Motor neuron (in vitro differentiated cells): ENCODE measurements at regions of chr2 and their contacts with region 1.

Region 1: DNA sequence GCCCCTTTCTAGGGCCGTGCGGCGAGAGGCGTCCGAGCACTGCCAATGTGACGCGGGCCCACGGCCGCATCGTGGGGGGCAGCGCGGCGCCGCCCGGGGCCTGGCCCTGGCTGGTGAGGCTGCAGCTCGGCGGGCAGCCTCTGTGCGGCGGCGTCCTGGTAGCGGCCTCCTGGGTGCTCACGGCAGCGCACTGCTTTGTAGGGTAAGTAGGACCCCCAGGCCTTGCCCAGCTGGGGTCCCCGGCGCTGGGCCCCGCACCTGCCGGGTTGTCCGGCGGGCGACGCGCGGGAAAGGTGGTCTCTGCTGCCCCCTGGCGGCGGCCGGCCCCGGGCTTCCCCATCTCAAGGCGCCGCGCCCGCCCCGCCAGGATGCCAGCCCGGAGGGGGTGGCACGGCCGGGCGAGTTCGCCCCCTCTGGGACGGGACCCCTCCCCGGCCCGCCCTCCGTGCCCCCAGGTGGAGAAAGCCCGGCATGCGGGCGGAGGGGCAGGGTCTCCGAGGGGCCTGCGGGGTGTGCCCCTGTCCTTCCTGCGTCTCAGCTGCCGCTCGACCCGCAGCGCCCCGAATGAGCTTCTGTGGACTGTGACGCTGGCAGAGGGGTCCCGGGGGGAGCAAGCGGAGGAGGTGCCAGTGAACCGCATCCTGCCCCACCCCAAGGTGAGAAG is 1.9 kb downstream of the PRSS56 start:
- ATAC-seq: peak; percentile 23 to 76 (median 36)
- H3K4me3 ChIP-seq: peak overlapping the region; percentile 25 to 40 (median 35)
- H3K27ac ChIP-seq: no peak overlapping the region
- H3K4me1 ChIP-seq: peaks cover 43 to 56% of the 10 kb centered on the region in 2 donors

Region 2: DNA sequence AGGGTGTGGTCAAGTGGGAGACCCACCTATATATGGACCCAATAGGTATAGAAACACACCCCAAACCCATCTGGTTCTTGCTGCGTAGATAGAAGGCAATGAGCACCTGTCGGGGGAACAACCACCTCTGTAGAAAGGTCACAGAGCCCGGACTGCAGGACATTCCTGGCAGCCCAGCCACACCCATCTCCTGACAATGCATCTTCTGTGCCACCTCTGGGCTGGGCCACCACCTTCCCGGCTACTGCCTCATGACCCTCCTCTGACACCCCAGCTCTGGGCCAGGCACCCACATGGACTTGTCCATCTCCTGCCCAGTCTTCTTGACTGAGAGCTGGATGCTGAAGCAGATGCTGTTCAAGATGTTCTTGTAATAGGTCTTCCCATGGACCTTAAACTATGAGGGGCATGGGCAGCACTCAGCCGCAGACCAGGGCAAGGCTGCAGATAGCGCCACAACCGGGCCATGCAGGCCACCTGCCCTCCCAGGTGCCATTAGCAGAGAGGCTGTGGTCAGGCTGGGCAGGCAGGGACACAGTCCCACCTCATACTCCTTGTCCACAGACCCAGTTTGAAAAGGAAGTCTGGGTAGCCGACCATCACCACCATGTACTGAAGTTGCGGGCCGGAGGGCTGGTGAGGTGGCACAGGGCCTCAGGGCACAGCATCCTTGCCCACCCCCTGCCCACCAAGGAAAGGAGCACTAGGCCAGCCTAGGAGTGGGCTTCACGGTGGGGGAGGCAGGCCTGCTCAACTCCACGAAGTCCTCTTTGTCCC is 106.2 kb before region 1 on chr2:
- in situ Hi-C with region 1: no loop called
- ATAC-seq: no peak
- H3K4me3 ChIP-seq: no peak overlapping the region
- H3K27ac ChIP-seq: no peak overlapping the region
- H3K4me1 ChIP-seq: peaks cover 0 to 11% of the 10 kb centered on the region in 2 donors

Region 3: GRCh38 chr2:232455426-232456255 is 66.5 kb before region 1 on chr2 and contains the start of gene ALPI:
- in situ Hi-C with region 1: loop called in 1 of 9 experiments (anchors 10 kb)
- ATAC-seq: no peak
- H3K4me3 ChIP-seq: no peak within 1 kb of the TSS
- H3K27ac ChIP-seq: no peak within 1 kb of the TSS
- H3K4me1 ChIP-seq: no peaks in the 10 kb centered on the region
- total RNA-seq, gene ALPI: 0.10 to 0.42 (median 0.18) TPM in 5 of 8 experiments, not detected in the others

Region 4: DNA sequence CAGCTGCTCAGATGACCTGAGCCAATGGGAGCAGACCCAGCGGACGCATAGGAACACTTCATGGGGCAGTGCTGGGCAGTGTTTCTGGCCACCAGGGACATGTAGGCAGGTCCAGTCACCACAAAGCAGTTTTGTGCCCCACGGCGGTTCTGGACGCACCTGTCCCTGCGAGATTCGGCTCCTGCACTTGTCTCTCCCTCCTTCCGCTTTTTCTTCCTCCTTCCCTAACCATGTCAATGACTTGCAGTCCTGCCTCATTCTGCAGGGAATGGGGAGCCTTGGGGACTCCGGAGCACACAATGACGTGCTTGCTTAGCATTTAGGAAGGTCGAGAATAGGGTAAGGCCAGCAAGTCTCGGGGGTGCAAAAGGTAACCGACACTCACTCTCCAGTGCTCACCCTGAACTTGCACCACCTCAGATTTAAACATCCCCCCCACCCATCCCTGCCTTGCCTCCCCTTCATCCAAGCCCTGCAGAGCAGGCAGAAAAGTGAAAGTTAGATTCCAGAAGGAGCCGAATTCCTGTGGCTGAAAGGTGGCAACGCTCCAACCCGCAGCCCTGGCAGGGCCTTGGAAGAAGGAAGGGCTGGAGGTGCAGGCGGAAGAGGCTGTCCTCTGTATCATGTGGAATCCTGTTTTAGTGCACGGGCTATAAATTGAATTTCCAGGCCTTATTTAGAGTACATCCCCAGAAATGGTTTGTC is 688.9 kb after region 1 on chr2:
- in situ Hi-C with region 1: no loop called
- ATAC-seq: peak in 3 of 8 experiments; percentile 69 to 84 (median 76)
- H3K4me3 ChIP-seq: no peak overlapping the region
- H3K27ac ChIP-seq: no peak overlapping the region
- H3K4me1 ChIP-seq: peaks cover 17 to 26% of the 10 kb centered on the region in 2 donors